WTC11 (cell line): ENCODE measurements at regions of chr19 and their contacts with region 1.

Region 1: DNA sequence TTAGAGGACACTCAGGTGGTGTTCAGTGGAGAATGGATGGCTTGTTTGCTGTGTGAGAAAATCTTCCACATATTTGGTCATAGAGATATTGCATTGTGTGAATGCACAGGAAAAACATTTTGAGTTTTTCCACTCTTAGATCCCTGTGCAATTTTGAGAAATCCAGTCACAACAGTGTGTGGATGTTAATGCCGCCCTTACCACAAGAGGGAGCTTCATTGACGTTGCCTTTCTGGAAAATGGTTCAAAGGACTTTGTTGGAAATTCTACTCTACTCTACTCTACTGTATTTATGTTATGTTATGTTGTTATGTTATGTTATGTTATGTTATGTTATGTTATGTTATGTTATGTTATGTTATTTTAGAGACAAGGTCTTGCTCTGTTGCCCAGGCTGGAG is 13.4 kb downstream of the ZNF20 start:
- DNase-seq: peak; percentile 22
- ATAC-seq: peak; percentile 53
- H3K4me3 Mint-ChIP-seq: no peak overlapping the region
- H3K27ac Mint-ChIP-seq: 0 out of 2 replicates have a peak overlapping the region, but pooled peaks have one; percentile 37
- H3K4me1 Mint-ChIP-seq: 0 out of 2 replicates have a peak, but pooled peaks cover 4% of the 10 kb centered on the region
- H3K27me3 Mint-ChIP-seq: no peaks in the 10 kb centered on the region; the same call in 1 of the 2 replicates
- CTCF ChIP-seq: peak; percentile 39; the same call in 1 of the 2 replicates

Region 2: GRCh38 chr19:12035220-12036153 is 91.2 kb before region 1 on chr19 and contains the start of gene ZNF433:
- CTCF ChIA-PET with region 1: no interaction called
- POLR2A ChIA-PET with region 1: no interaction called
- DNase-seq: peak; percentile 99
- ATAC-seq: peak; percentile 98
- H3K4me3 Mint-ChIP-seq: peak within 1 kb of the TSS; percentile 83
- H3K27ac Mint-ChIP-seq: peak within 1 kb of the TSS; percentile 93
- H3K4me1 Mint-ChIP-seq: peaks cover 26% of the 10 kb centered on the region
- H3K27me3 Mint-ChIP-seq: peaks cover 32% of the 10 kb centered on the region
- CTCF ChIP-seq: no peak
- total RNA-seq, gene ZNF433: 2.9 TPM in 3 replicates

Region 3: GRCh38 chr19:12052497-12053169 is 74.1 kb before region 1 on chr19 and contains the start of gene ZNF878:
- CTCF ChIA-PET with region 1: interaction called, 10 read pairs
- POLR2A ChIA-PET with region 1: interaction called, 4 read pairs
- DNase-seq: peak; percentile 99
- ATAC-seq: peak; percentile 98
- H3K4me3 Mint-ChIP-seq: peak within 1 kb of the TSS; percentile 91
- H3K27ac Mint-ChIP-seq: peak within 1 kb of the TSS; percentile 98
- H3K4me1 Mint-ChIP-seq: peaks cover 18% of the 10 kb centered on the region
- H3K27me3 Mint-ChIP-seq: peaks cover 2% of the 10 kb centered on the region; the same call in 1 of the 2 replicates
- CTCF ChIP-seq: no peak
- total RNA-seq, gene ZNF878: 10.1 to 12.5 TPM (median 10.7 TPM) in 3 replicates

Region 4: DNA sequence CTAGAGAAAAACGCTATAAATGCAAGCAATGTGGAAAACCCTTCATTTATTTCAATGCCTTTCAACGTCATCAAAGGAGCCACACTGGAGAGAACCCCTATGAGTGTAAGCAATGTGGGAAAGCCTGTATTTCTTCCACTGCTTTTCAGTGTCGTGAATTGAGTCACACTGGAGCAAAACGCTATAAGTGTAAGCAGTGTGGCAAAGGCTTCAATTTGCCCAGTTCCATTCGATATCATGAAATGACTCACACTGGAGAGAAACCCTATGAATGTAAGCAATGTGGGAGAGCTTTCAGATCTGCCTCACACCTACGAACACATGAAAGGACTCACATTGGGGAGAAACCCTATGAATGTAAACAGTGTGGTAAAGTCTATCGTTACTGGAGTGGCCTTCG is 14.0 kb before region 1 on chr19:
- CTCF ChIA-PET with region 1: interaction called, 13 read pairs
- POLR2A ChIA-PET with region 1: interaction called, 3 read pairs
- DNase-seq: no peak
- ATAC-seq: no peak
- H3K4me3 Mint-ChIP-seq: no peak overlapping the region
- H3K27ac Mint-ChIP-seq: peak overlapping the region; percentile 58
- H3K4me1 Mint-ChIP-seq: no peaks in the 10 kb centered on the region
- H3K27me3 Mint-ChIP-seq: peaks cover 5% of the 10 kb centered on the region; the same call in 1 of the 2 replicates
- CTCF ChIP-seq: no peak

Region 5: GRCh38 chr19:12224676-12225075 is 98.0 kb after region 1 on chr19:
- CTCF ChIA-PET with region 1: no interaction called
- POLR2A ChIA-PET with region 1: no interaction called
- DNase-seq: no peak
- ATAC-seq: no peak
- H3K4me3 Mint-ChIP-seq: no peak overlapping the region
- H3K27ac Mint-ChIP-seq: no peak overlapping the region
- H3K4me1 Mint-ChIP-seq: no peaks in the 10 kb centered on the region
- H3K27me3 Mint-ChIP-seq: no peaks in the 10 kb centered on the region
- CTCF ChIP-seq: no peak